Heart right ventricle (tissue), 16 donors: ENCODE measurements at regions of chr5 and their contacts with region 1.

Region 1: DNA sequence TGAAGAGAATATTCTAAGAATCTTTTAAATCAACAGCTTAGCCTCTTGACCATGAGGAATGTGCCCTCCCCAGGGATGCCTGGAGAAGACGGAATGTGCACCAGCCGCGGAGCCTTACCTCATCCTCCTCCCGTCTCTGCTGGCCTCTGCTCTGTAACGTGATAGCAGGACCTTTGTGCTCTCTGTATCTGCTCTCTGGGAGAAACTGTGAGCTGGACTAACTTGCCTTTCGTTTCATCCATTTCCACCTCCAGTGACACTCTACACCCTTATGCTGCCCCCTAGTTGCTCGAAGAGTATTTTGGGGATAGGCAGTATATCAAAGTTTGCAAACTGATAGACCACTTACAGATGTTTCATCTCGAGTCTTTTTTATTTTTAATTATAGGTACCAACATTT is 141.4 kb downstream of the NPR3 start:
- DNase-seq: peak in 1 of 2 donors; percentile 4
- ATAC-seq: peak in 7 of 8 donors; percentile 58 to 80 (median 65)
- H3K4me3 ChIP-seq: no peak overlapping the region
- H3K27ac ChIP-seq: no peak overlapping the region
- H3K4me1 ChIP-seq: peaks cover 0 to 9% (median 0%) of the 10 kb centered on the region in 9 donors
- H3K27me3 ChIP-seq: no peaks in the 10 kb centered on the region
- CTCF ChIP-seq: peak in 7 of 9 donors; percentile 30 to 52 (median 45)

Region 2: DNA sequence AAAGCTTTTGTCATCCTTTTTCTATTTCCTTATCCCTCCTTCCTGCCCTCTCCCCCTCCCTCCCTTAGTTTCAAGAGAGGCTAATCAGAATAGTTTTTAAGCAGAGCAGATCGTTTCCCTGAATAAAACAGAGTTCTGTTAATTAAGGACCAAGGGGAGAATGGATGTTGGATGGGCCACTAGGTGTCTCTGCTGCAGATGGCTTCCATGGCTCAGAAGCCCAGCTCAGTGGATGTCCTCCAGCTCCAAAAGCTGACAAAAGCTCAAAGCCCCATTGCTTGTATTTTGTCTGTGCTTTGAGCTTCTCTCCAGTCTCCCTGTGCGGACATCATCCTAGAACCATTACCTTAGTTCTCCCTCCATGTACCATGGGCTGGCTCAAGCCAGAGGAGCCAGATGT is 162.4 kb before region 1 on chr5:
- intact Hi-C with region 1: loop called in 1 of 10 experiments (anchors 10 kb)
- DNase-seq: no peak
- ATAC-seq: no peak
- H3K4me3 ChIP-seq: no peak overlapping the region
- H3K27ac ChIP-seq: peak overlapping the region in 1 of 10 donors; percentile 6
- H3K4me1 ChIP-seq: peaks cover 0 to 28% (median 7%) of the 10 kb centered on the region in 9 donors
- H3K27me3 ChIP-seq: no peaks in the 10 kb centered on the region
- CTCF ChIP-seq: peak in 3 of 9 donors; percentile 7 to 20 (median 8)